OCI-LY7 (cell line): ENCODE measurements at regions of chr14 and their contacts with region 1.

Region 1: GRCh38 chr14:77124345-77125280 is 17.0 kb downstream of the ZDHHC22 start:
- DNase-seq: peak; percentile 51
- H3K4me3 ChIP-seq: peak overlapping the region; percentile 39
- H3K27ac ChIP-seq: peak overlapping the region; percentile 96
- H3K4me1 ChIP-seq: peaks cover 69% of the 10 kb centered on the region
- CTCF ChIP-seq: peak; percentile 56

Region 2: GRCh38 chr14:77181603-77182437 is 57.2 kb after region 1 on chr14 and contains the start of gene TMEM63C:
- CTCF ChIA-PET with region 1: no interaction called
- POLR2A ChIA-PET with region 1: no interaction called
- intact Hi-C with region 1: loop called (anchors 2 kb)
- DNase-seq: peak; percentile 97
- H3K4me3 ChIP-seq: peak within 1 kb of the TSS; percentile 76
- H3K27ac ChIP-seq: no peak within 1 kb of the TSS
- H3K4me1 ChIP-seq: peaks cover 24% of the 10 kb centered on the region
- CTCF ChIP-seq: peak; percentile 33; the same call in 1 of the 2 replicates
- total RNA-seq, gene TMEM63C: 0.41 and 0.79 TPM in 2 replicates